K562 (cell line): ENCODE measurements at regions of chr20 and their contacts with region 1.

Region 1: GRCh38 chr20:17504898-17505635 is 26.1 kb downstream of the BFSP1 start:
- DNase-seq: peak; percentile 19 to 43 (median 24)
- ATAC-seq: peak; percentile 76
- H3K4me3 ChIP-seq: no peak overlapping the region
- H3K27ac ChIP-seq: no peak overlapping the region
- H3K4me1 ChIP-seq: peaks cover 6 to 23% of the 10 kb centered on the region in 2 experiments
- H3K27me3 ChIP-seq: peaks cover 0 to 16% of the 10 kb centered on the region in 2 experiments; a peak in 3 of 5 replicates
- CTCF ChIP-seq: peak; percentile 35 to 74 (median 45); a peak in 4 of 6 replicates
- EP300 ChIP-seq: no peak
- POLR2A ChIP-seq: no peak
- RAD21 ChIP-seq: peak; percentile 55 to 61

Region 2: GRCh38 chr20:17617551-17618223 is 112.6 kb after region 1 on chr20:
- CTCF ChIA-PET with region 1: interaction called, 4 read pairs
- POLR2A ChIA-PET with region 1: no interaction called
- in situ Hi-C with region 1: no loop called
- intact Hi-C with region 1: loop called (anchors 1 kb)
- DNase-seq: peak; percentile 56 to 69 (median 64)
- ATAC-seq: peak; percentile 91
- H3K4me3 ChIP-seq: no peak overlapping the region
- H3K27ac ChIP-seq: no peak overlapping the region
- H3K4me1 ChIP-seq: peaks cover 0 to 20% of the 10 kb centered on the region in 2 experiments; a peak in 2 of 5 replicates
- H3K27me3 ChIP-seq: no peaks in the 10 kb centered on the region
- CTCF ChIP-seq: peak; percentile 63 to 71 (median 68)
- EP300 ChIP-seq: no peak
- POLR2A ChIP-seq: no peak
- RAD21 ChIP-seq: peak; percentile 69 to 82

Region 3: DNA sequence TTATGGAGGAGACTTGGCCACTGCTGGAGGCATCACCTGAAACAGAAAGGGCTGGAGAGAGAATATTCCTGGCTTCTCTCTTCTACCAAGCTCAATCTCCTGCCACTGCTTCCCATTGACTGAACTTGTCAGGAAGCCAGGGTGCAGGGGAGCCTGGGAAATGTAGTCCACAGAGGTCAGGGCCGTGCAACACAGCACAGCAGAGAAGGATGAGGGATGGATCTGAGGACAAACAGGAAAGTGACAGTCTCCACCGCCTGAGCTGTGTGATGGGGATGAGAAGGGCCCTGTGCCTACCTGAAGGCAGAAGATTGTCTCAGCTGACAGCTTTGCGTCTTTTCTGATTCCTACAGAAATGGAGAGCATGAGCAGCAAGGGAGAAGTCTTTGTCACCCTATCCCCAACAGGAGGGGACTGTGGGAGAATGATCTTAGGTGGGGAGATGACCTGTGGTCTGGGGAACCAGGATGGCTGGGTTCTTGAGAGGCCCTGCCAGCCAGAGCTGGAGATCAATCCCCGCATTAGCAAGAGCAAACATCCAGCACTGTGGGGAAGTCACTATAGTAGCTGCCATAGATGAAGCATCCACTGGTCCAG is 349.3 kb after region 1 on chr20:
- CTCF ChIA-PET with region 1: no interaction called
- POLR2A ChIA-PET with region 1: no interaction called
- in situ Hi-C with region 1: no loop called
- intact Hi-C with region 1: no loop called
- DNase-seq: peak in 1 of 4 experiments; percentile 14
- ATAC-seq: peak; percentile 81
- H3K4me3 ChIP-seq: no peak overlapping the region
- H3K27ac ChIP-seq: no peak overlapping the region
- H3K4me1 ChIP-seq: peaks cover 0 to 2% of the 10 kb centered on the region in 2 experiments; a peak in 1 of 5 replicates
- H3K27me3 ChIP-seq: peaks cover 6 to 14% of the 10 kb centered on the region in 2 experiments; a peak in 4 of 5 replicates
- CTCF ChIP-seq: no peak
- EP300 ChIP-seq: no peak
- POLR2A ChIP-seq: no peak
- RAD21 ChIP-seq: no peak

Region 4: DNA sequence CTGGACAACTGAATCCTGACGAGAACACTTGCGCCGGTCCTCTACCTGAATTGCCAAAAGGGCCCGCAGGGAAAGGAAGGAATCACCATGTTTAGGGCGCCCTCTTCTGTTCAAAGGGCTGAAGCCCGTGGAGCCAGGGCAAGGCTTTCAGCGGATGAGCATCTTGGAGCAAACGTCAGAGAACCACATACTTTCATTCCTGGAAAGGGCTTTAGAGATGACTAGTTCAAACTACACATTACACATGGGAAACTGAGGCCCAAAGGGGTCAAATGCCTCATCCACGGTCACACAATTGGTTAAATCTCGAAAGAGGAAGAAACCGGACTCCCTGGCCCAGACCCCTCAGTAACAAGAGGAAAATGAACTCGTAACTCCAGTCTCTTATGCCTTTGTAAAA is 771.8 kb after region 1 on chr20:
- CTCF ChIA-PET with region 1: interaction called, 4 read pairs
- POLR2A ChIA-PET with region 1: no interaction called
- in situ Hi-C with region 1: loop called (anchors 25 kb)
- intact Hi-C with region 1: loop called (anchors 10 kb)
- DNase-seq: peak; percentile 20 to 77 (median 40)
- ATAC-seq: peak; percentile 97
- H3K4me3 ChIP-seq: no peak overlapping the region
- H3K27ac ChIP-seq: no peak overlapping the region
- H3K4me1 ChIP-seq: no peaks in the 10 kb centered on the region; a peak in 1 of 5 replicates
- H3K27me3 ChIP-seq: peaks cover 0 to 2% of the 10 kb centered on the region in 2 experiments; a peak in 4 of 5 replicates
- CTCF ChIP-seq: peak; percentile 78 to 82 (median 82)
- EP300 ChIP-seq: no peak
- POLR2A ChIP-seq: no peak
- RAD21 ChIP-seq: peak; percentile 55 to 77

Region 5: DNA sequence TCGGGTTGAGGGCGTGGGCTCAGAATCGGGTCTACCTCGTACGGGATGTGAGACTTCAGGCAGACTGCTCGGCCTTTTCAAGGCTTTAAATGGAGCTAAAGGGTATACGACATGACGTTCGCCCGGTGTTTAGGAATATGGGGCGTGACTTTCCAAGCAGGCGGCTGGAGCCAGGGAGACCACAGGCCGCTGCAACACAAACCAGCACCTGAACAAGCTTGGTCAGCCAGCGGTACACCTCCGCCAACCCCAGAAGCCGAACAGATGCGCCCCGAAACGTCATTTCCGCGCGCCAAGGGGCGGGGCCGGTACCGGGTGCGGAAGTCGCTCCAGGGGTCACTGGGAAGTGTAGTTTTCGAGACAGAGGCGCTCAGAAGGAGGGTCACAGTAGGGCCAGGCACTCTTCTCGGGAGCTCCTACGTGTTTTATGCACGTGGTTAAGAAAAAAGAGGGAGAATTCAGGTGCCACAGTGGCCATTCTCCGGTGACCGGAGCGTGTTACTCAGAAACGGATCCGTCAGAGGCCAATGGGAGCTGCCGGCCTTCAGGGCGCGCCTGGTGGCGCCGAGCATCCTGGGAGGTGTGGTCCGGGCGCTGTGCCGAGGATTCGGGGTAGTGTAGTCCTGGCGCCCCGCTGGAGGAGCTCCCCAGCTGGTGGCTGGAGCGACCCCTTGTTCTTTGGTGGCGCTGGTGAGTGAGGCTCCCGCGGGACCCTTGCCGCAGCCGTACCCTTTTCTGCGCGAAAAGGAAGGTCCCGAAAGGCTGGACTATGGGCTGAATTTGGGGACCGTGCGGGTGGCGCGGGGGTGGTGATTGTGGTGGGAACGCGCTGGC is 783.1 kb after region 1 on chr20 and contains the start of gene ZNF133:
- CTCF ChIA-PET with region 1: no interaction called
- POLR2A ChIA-PET with region 1: interaction called, 4 read pairs
- in situ Hi-C with region 1: loop called (anchors 25 kb)
- intact Hi-C with region 1: no loop called
- DNase-seq: peak; percentile 79 to 91 (median 84)
- ATAC-seq: peak; percentile 100
- H3K4me3 ChIP-seq: peak within 1 kb of the TSS; percentile 87
- H3K27ac ChIP-seq: peak within 1 kb of the TSS; percentile 99
- H3K4me1 ChIP-seq: peaks cover 3 to 10% of the 10 kb centered on the region in 2 experiments; a peak in 2 of 5 replicates
- H3K27me3 ChIP-seq: no peaks in the 10 kb centered on the region
- CTCF ChIP-seq: peak in 2 of 3 experiments; percentile 14; a peak in 2 of 6 replicates
- EP300 ChIP-seq: no peak
- POLR2A ChIP-seq: peak; percentile 79
- RAD21 ChIP-seq: no peak
- polyA plus RNA-seq, gene ZNF133: 1.1 to 3.5 TPM